AG04450 (cell line): ENCODE measurements at regions of chr19 and their contacts with region 1.

Region 1: DNA sequence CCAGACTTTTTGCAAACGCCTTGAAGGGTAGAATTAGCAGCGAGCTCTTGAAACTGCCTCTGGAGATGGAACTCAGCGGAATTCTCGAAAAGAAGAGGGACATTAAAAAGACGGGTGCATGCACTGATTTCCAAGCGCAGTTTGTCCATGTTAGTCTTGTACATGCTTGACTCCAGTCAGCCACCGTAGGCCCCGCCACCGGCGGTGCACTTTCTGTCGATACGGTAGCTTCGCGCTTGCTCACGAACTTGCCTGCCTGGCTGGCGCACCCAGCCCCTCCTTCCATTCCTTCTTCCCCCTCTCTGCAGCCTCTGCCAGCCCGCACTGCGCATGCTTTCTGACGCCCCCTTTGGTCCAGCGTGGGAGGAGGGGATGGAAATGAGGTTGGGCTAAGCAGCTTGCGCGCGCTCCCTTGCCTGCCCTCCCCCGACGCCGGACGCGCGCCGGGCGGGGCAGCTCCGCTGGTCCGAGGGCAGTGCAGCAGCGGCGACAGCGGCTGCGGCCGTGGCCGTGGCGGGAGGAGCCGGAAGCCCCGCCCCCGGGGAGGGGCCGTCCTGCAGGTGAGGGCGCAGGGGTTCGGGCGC is at the start of gene ZNF575:
- DNase-seq: peak; percentile 93
- H3K4me3 ChIP-seq: peak within 1 kb of the TSS; percentile 68
- H3K27ac ChIP-seq: peak within 1 kb of the TSS; percentile 91
- H3K27me3 ChIP-seq: no peaks in the 10 kb centered on the region
- CTCF ChIP-seq: no peak
- polyA plus RNA-seq, gene ZNF575: 0.16 and 0.17 TPM in 2 replicates

Region 2: DNA sequence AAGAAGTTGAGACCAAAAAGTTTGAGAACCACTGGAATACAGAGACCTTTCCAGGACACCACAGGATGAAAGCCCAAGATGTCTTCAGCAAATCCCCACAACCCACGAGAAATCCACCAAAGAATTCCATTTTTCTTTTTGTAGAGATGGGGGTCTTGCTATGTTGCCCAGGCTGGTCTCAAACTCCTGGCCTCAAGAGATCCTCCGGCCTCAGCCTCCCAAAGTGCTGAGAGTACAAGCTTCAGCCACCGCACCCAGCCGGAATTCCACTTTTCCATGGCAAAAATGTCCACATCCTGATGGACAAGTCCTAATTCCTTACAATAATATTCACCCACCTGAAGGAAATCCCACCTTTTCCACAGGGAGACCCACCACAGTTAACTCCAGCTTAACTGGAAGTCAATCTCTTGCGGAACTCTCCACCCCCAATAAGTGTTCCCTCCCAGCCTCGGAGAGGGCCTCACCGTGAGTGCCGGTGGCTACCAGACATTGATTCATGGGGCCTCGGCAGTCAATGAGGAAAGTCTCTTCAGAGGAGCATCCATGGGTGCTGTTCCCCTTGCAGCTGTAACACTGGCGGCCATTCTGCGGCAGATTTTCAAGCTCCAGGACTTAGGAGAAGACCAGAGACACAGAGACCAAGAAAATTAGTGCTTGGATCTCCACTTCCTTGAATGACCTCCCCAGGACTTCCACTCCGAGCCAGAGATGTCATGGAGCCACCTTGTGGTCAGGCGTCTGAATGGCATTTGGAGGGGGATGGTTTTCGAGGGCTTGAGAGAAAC is 118.9 kb after region 1 on chr19:
- CTCF ChIA-PET with region 1: interaction called, 11 read pairs
- POLR2A ChIA-PET with region 1: no interaction called
- DNase-seq: peak; percentile 27
- H3K4me3 ChIP-seq: no peak overlapping the region
- H3K27ac ChIP-seq: no peak overlapping the region
- H3K27me3 ChIP-seq: no peaks in the 10 kb centered on the region
- CTCF ChIP-seq: peak; percentile 83

Region 3: DNA sequence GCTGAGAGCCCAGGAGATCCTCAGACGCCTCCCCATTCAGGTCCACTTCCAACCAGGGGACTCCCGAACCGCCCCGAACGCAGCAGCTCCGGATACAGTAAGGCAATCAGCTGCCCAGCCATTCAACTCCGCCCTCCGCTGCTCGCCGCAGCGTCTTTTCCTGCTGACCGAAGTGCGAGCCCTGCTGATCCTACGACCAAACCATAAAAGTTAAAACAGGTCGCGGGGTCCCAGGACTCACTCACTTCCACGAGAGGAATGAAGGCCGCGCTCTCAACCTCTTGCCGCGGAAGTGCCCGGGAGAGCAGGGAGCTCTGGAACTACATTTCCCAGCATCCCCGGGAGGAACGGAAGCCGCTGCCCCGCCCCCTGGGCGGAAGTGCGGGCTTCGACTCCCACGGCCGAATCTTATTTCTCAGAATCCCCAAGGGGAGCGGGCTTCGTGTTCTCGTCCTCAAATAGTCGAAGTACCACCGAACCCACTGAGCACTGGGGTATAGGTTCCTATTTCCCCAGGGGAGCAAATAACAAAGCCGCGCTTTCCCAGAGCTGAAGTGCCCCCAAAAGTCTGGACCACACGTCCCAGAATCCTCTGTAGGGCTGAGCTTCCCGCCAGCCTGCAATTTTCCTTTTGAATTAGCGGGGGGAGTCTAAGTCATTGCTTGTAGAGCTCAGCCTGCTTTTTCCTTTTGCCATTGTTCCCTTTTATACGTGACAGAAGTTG is 402.1 kb after region 1 on chr19 and contains the start of gene ZNF45:
- CTCF ChIA-PET with region 1: no interaction called
- POLR2A ChIA-PET with region 1: interaction called, 10 read pairs
- DNase-seq: peak; percentile 60
- H3K4me3 ChIP-seq: peak within 1 kb of the TSS; percentile 77
- H3K27ac ChIP-seq: peak within 1 kb of the TSS; percentile 65
- H3K27me3 ChIP-seq: no peaks in the 10 kb centered on the region
- CTCF ChIP-seq: no peak
- polyA plus RNA-seq, gene ZNF45: 12.0 and 16.1 TPM in 2 replicates